Naive thymus-derived CD4-positive, alpha-beta T cell (primary cell): ENCODE measurements at regions of chr10 and their contacts with region 1.

Region 1: GRCh38 chr10:103772096-103772845 is 83.1 kb downstream of the SH3PXD2A start:
- DNase-seq: peak; percentile 29 to 61 (median 56)
- ATAC-seq: peak; percentile 81
- H3K4me3 ChIP-seq: peak overlapping the region; percentile 90
- H3K4me3 Mint-ChIP-seq: peak overlapping the region; percentile 82 to 96 (median 92)
- H3K27ac ChIP-seq: peak overlapping the region; percentile 74
- H3K27ac Mint-ChIP-seq: peak overlapping the region; percentile 74 to 97 (median 93)
- H3K4me1 ChIP-seq: peaks cover 4 to 14% of the 10 kb centered on the region in 2 donors
- H3K4me1 Mint-ChIP-seq: peaks cover 25 to 51% (median 39%) of the 10 kb centered on the region in 7 donors
- H3K27me3 ChIP-seq: no peaks in the 10 kb centered on the region
- H3K27me3 Mint-ChIP-seq: peaks cover 0 to 40% (median 0%) of the 10 kb centered on the region in 5 donors

Region 2: GRCh38 chr10:103645141-103646054 is 126.9 kb before region 1 on chr10:
- CTCF ChIA-PET with region 1: no interaction called
- POLR2A ChIA-PET with region 1: no interaction called
- intact Hi-C with region 1: no loop called
- DNase-seq: no peak
- ATAC-seq: peak; percentile 83
- H3K4me3 ChIP-seq: no peak overlapping the region
- H3K4me3 Mint-ChIP-seq: no peak overlapping the region
- H3K27ac ChIP-seq: no peak overlapping the region
- H3K27ac Mint-ChIP-seq: no peak overlapping the region
- H3K4me1 ChIP-seq: no peaks in the 10 kb centered on the region
- H3K4me1 Mint-ChIP-seq: peaks cover 0 to 4% (median 0%) of the 10 kb centered on the region in 7 donors
- H3K27me3 ChIP-seq: no peaks in the 10 kb centered on the region
- H3K27me3 Mint-ChIP-seq: no peaks in the 10 kb centered on the region

Region 3: DNA sequence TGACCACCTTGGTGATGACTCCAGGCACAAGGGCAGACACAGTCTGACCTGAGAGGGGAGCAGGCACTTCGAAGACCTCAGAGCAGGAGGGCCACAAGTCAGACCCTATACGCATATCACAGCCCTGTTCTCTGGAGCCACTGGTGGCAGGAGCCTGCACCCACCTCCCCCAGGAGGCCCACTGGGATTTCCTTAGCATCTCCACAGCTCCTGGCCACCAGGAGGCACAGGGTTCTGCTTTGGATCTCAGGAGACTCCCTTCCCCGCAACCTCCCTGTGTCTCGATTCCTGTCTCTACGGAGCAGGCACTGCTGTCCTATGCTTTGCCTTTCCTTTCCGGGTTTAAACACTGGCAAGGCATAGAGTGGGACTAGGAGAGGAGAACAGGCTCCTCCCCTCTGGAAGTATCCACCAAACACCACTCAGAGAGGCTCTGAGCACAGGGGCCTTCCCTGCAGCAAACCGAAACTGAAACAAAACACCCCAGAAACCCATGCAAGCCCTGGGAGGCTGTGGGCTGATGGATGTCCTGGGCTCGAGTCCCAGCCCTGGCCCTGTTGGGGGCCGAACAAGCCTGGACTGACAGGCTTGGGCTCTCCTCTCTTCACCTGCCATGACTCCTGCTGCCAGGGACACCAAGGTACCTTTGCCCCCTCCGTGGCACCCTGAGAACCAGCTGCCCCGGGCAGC is 112.5 kb before region 1 on chr10:
- CTCF ChIA-PET with region 1: no interaction called
- POLR2A ChIA-PET with region 1: no interaction called
- intact Hi-C with region 1: loop called in 1 of 2 experiments (anchors 1 kb)
- DNase-seq: peak in 8 of 9 donors; percentile 48 to 70 (median 62)
- ATAC-seq: peak; percentile 82
- H3K4me3 ChIP-seq: peak overlapping the region; percentile 96
- H3K4me3 Mint-ChIP-seq: peak overlapping the region; percentile 83 to 94 (median 89)
- H3K27ac ChIP-seq: peak overlapping the region; percentile 92
- H3K27ac Mint-ChIP-seq: peak overlapping the region; percentile 87 to 95 (median 91)
- H3K4me1 ChIP-seq: peaks cover 4 to 6% of the 10 kb centered on the region in 2 donors
- H3K4me1 Mint-ChIP-seq: peaks cover 6 to 21% (median 13%) of the 10 kb centered on the region in 7 donors
- H3K27me3 ChIP-seq: no peaks in the 10 kb centered on the region
- H3K27me3 Mint-ChIP-seq: no peaks in the 10 kb centered on the region

Region 4: DNA sequence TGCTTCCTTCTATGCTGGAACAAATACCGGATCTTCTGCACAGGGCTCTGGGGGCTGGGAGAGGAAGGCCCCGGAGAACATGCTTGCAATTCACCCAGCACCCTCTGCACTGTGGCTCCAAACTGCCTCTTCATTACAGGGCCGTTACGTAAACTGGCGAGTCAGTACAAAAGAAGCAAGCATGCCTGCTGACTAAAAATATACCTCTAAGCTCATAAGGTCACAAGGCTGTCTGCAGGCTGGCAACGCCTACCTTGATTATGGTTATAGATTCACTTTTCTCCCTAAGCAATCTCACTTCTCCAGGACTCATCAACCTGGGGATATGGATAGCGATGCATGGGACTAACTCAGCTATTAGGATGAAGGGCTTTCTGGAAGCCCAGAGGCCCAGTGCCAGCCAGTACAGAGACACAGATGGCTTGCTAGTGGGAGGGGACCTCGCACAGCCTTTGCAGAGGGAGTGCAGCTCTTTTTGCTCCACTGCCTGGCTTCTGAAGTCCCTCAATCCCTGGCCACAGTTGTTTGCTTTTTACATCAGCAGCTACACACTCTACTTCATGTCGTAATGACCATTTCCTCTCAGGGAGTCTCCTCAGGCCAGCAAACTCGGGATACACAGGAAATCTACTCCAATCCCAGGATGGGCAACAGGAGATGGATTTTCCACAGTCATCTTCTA is 13.0 kb before region 1 on chr10:
- CTCF ChIA-PET with region 1: interaction called, 3 read pairs
- POLR2A ChIA-PET with region 1: interaction called, 34 read pairs
- intact Hi-C with region 1: loop called (anchors 1 kb)
- DNase-seq: peak in 7 of 9 donors; percentile 18 to 53 (median 39)
- ATAC-seq: peak; percentile 60
- H3K4me3 ChIP-seq: no peak overlapping the region
- H3K4me3 Mint-ChIP-seq: peak overlapping the region in 7 of 10 donors; percentile 8 to 77 (median 34)
- H3K27ac ChIP-seq: no peak overlapping the region
- H3K27ac Mint-ChIP-seq: peak overlapping the region in 5 of 9 donors; percentile 14 to 77 (median 69)
- H3K4me1 ChIP-seq: peaks cover 40 to 43% of the 10 kb centered on the region in 2 donors
- H3K4me1 Mint-ChIP-seq: peaks cover 32 to 70% (median 47%) of the 10 kb centered on the region in 7 donors
- H3K27me3 ChIP-seq: no peaks in the 10 kb centered on the region
- H3K27me3 Mint-ChIP-seq: peaks cover 0 to 30% (median 0%) of the 10 kb centered on the region in 5 donors

Region 5: GRCh38 chr10:103789771-103790201 is 17.5 kb after region 1 on chr10:
- CTCF ChIA-PET with region 1: no interaction called
- POLR2A ChIA-PET with region 1: interaction called, 11 read pairs
- intact Hi-C with region 1: no loop called
- DNase-seq: peak in 6 of 9 donors; percentile 8 to 44 (median 40)
- ATAC-seq: peak; percentile 60
- H3K4me3 ChIP-seq: no peak overlapping the region
- H3K4me3 Mint-ChIP-seq: peak overlapping the region in 7 of 10 donors; percentile 0 to 61 (median 20)
- H3K27ac ChIP-seq: no peak overlapping the region
- H3K27ac Mint-ChIP-seq: peak overlapping the region in 7 of 9 donors; percentile 19 to 81 (median 68)
- H3K4me1 ChIP-seq: peaks cover 0 to 7% of the 10 kb centered on the region in 2 donors
- H3K4me1 Mint-ChIP-seq: peaks cover 0 to 14% (median 11%) of the 10 kb centered on the region in 7 donors
- H3K27me3 ChIP-seq: no peaks in the 10 kb centered on the region
- H3K27me3 Mint-ChIP-seq: peaks cover 0 to 15% (median 0%) of the 10 kb centered on the region in 5 donors

Region 6: GRCh38 chr10:103845972-103846371 is 73.7 kb after region 1 on chr10:
- CTCF ChIA-PET with region 1: no interaction called
- POLR2A ChIA-PET with region 1: interaction called, 6 read pairs
- intact Hi-C with region 1: loop called (anchors 5 kb)
- DNase-seq: peak in 8 of 9 donors; percentile 17 to 55 (median 41)
- ATAC-seq: peak; percentile 77
- H3K4me3 ChIP-seq: peak overlapping the region; percentile 11
- H3K4me3 Mint-ChIP-seq: peak overlapping the region; percentile 2 to 77 (median 54)
- H3K27ac ChIP-seq: no peak overlapping the region
- H3K27ac Mint-ChIP-seq: peak overlapping the region in 8 of 9 donors; percentile 3 to 77 (median 33)
- H3K4me1 ChIP-seq: peaks cover 13% of the 10 kb centered on the region in 2 donors
- H3K4me1 Mint-ChIP-seq: peaks cover 8 to 30% (median 23%) of the 10 kb centered on the region in 7 donors
- H3K27me3 ChIP-seq: no peaks in the 10 kb centered on the region
- H3K27me3 Mint-ChIP-seq: peaks cover 0 to 23% (median 10%) of the 10 kb centered on the region in 5 donors